K562 (cell line): ENCODE measurements at regions of chr1 and their contacts with region 1.

Region 1: GRCh38 chr1:207751790-207752455 is at the start of gene CD46:
- DNase-seq: peak; percentile 96 to 100 (median 96)
- ATAC-seq: peak; percentile 89
- H3K4me3 ChIP-seq: peak within 1 kb of the TSS; percentile 92
- H3K27ac ChIP-seq: peak within 1 kb of the TSS; percentile 80
- H3K4me1 ChIP-seq: peaks cover 33 to 59% of the 10 kb centered on the region in 2 experiments
- H3K27me3 ChIP-seq: no peaks in the 10 kb centered on the region
- CTCF ChIP-seq: peak in 2 of 3 experiments; percentile 2 to 4; a peak in 1 of 6 replicates
- EP300 ChIP-seq: peak; percentile 48
- POLR2A ChIP-seq: peak; percentile 96
- RAD21 ChIP-seq: no peak
- polyA plus RNA-seq, gene CD46: 143 to 220 TPM

Region 2: GRCh38 chr1:207025144-207025880 is 726.6 kb before region 1 on chr1:
- CTCF ChIA-PET with region 1: no interaction called
- POLR2A ChIA-PET with region 1: no interaction called
- in situ Hi-C with region 1: no loop called
- intact Hi-C with region 1: loop called (anchors 5 kb)
- DNase-seq: no peak
- ATAC-seq: peak; percentile 6
- H3K4me3 ChIP-seq: peak overlapping the region; percentile 15
- H3K27ac ChIP-seq: peak overlapping the region; percentile 100
- H3K4me1 ChIP-seq: peaks cover 49 to 85% of the 10 kb centered on the region in 2 experiments
- H3K27me3 ChIP-seq: no peaks in the 10 kb centered on the region
- CTCF ChIP-seq: 0 out of 6 replicates have a peak, but pooled peaks of 1 of the 3 experiments have one; percentile 4
- EP300 ChIP-seq: peak; percentile 2; the same call in 1 of the 2 replicates
- POLR2A ChIP-seq: no peak
- RAD21 ChIP-seq: no peak; a peak in 2 of 4 replicates

Region 3: GRCh38 chr1:207644852-207645634 is 106.9 kb before region 1 on chr1 and contains the start of gene CR1L:
- CTCF ChIA-PET with region 1: no interaction called
- POLR2A ChIA-PET with region 1: interaction called, 5 read pairs
- in situ Hi-C with region 1: no loop called
- intact Hi-C with region 1: loop called (anchors 5 kb)
- DNase-seq: peak; percentile 95 to 99 (median 96)
- ATAC-seq: peak; percentile 87
- H3K4me3 ChIP-seq: peak within 1 kb of the TSS; percentile 67
- H3K27ac ChIP-seq: peak within 1 kb of the TSS; percentile 80
- H3K4me1 ChIP-seq: peaks cover 23 to 25% of the 10 kb centered on the region in 2 experiments
- H3K27me3 ChIP-seq: no peaks in the 10 kb centered on the region
- CTCF ChIP-seq: no peak
- EP300 ChIP-seq: no peak
- POLR2A ChIP-seq: peak; percentile 86
- RAD21 ChIP-seq: no peak
- polyA plus RNA-seq, gene CR1L: 53.4 to 74.8 TPM

Region 4: DNA sequence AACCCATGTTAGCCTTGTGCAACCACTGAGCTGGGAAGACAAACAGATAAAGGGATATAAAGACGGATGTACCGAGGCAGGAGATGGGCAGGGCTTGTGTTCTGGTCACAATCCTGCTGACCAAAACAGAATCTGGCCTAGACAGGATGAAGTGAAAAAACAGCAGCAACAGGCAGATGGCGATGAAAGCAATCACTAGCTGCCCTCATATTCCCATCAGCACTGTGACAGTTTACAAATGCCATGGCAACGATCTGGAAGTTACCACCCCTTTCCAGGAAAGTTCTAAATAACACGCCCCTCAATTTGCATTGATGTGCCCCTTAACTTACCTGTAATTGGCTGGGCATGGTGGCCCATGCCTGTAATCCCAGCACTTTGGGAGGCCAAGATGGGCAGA is 40.6 kb before region 1 on chr1:
- CTCF ChIA-PET with region 1: interaction called, 3 read pairs
- POLR2A ChIA-PET with region 1: interaction called, 3 read pairs
- in situ Hi-C with region 1: no loop called
- intact Hi-C with region 1: loop called (anchors 2 kb)
- DNase-seq: peak in 2 of 4 experiments; percentile 63 to 69
- ATAC-seq: peak; percentile 91
- H3K4me3 ChIP-seq: no peak overlapping the region
- H3K27ac ChIP-seq: no peak overlapping the region
- H3K4me1 ChIP-seq: 0 out of 5 replicates have a peak, but pooled peaks cover 0 to 4% of the 10 kb centered on the region in 2 experiments
- H3K27me3 ChIP-seq: no peaks in the 10 kb centered on the region
- CTCF ChIP-seq: peak; percentile 35 to 62 (median 55); a peak in 4 of 6 replicates
- EP300 ChIP-seq: no peak
- POLR2A ChIP-seq: no peak
- RAD21 ChIP-seq: peak; percentile 63 to 83

Region 5: DNA sequence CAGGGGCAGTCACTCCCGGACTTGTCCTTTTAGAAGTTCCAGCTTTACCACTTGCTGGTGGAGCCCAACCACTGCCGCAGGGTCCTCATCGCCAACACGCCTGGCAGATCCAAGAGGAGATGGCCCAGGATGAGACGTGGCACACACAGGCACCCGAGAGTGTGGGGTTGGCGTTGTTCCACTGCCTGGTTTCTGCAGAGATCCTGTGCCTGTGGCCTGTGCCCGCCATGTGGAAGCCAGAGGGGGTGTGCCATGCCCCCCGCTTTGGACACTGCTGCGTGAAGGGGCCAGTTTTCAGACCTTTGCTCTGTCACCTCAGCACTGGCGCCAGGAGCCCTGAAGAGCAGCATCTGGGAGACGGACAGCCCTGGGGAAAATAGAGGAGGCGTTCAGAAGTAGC is 10.7 kb after region 1 on chr1:
- CTCF ChIA-PET with region 1: no interaction called
- POLR2A ChIA-PET with region 1: interaction called, 13 read pairs
- in situ Hi-C with region 1: no loop called
- intact Hi-C with region 1: no loop called
- DNase-seq: no peak
- ATAC-seq: no peak; the same call in 2 of the 3 replicates
- H3K4me3 ChIP-seq: no peak overlapping the region
- H3K27ac ChIP-seq: no peak overlapping the region
- H3K4me1 ChIP-seq: peaks cover 0 to 6% of the 10 kb centered on the region in 2 experiments; a peak in 1 of 5 replicates
- H3K27me3 ChIP-seq: no peaks in the 10 kb centered on the region
- CTCF ChIP-seq: no peak
- EP300 ChIP-seq: no peak
- POLR2A ChIP-seq: no peak; the same call in 1 of the 2 replicates
- RAD21 ChIP-seq: no peak

Region 6: GRCh38 chr1:207779008-207779407 is 27.1 kb after region 1 on chr1:
- CTCF ChIA-PET with region 1: no interaction called
- POLR2A ChIA-PET with region 1: no interaction called
- in situ Hi-C with region 1: no loop called
- intact Hi-C with region 1: loop called (anchors 2 kb)
- DNase-seq: peak in 1 of 4 experiments; percentile 40
- ATAC-seq: peak; percentile 63
- H3K4me3 ChIP-seq: no peak overlapping the region
- H3K27ac ChIP-seq: no peak overlapping the region
- H3K4me1 ChIP-seq: peaks cover 4 to 21% of the 10 kb centered on the region in 2 experiments; a peak in 4 of 5 replicates
- H3K27me3 ChIP-seq: no peaks in the 10 kb centered on the region
- CTCF ChIP-seq: no peak
- EP300 ChIP-seq: peak; percentile 77
- POLR2A ChIP-seq: no peak
- RAD21 ChIP-seq: no peak

Region 7: DNA sequence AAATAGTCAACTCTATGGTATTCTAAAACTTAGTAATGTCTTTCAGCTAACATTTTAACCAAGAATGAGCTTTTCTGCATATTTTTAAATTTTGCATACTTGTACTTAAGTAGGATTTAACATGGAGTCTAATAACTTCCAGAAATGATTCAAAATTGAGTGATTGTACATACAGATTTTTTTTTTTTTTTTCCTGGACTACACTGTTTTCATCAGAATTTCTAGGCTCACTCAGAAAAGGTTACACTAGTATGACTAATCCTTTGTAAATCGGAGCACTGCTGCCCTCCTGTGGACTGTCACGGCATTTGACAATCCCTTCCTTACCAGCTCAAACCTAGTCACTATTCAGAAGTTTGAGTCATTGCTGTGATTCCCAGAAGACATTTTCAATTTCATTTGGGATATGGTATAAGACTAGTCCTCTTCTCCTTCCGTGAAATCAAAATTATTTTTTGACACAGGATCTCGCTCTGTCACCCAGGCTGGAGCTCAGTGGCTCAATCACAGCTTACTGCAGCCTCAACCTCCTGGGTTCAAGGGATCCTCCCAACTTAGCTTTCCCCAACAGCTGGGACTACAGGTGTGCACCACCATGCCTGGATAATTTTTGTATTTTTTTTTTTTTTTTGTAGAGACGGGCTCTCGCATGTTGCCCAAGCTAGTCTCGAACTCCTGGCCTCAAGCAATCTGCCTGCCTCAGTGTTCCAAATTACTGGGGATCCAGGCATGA is 45.5 kb after region 1 on chr1:
- CTCF ChIA-PET with region 1: no interaction called
- POLR2A ChIA-PET with region 1: no interaction called
- in situ Hi-C with region 1: no loop called
- intact Hi-C with region 1: loop called (anchors 2 kb)
- DNase-seq: peak; percentile 74 to 88 (median 79)
- ATAC-seq: peak; percentile 96
- H3K4me3 ChIP-seq: no peak overlapping the region
- H3K27ac ChIP-seq: no peak overlapping the region
- H3K4me1 ChIP-seq: no peaks in the 10 kb centered on the region
- H3K27me3 ChIP-seq: no peaks in the 10 kb centered on the region
- CTCF ChIP-seq: peak; percentile 77 to 91 (median 87)
- EP300 ChIP-seq: no peak
- POLR2A ChIP-seq: no peak; the same call in none of the 2 replicates
- RAD21 ChIP-seq: peak; percentile 85 to 87

Region 8: GRCh38 chr1:207885129-207886032 is 133.5 kb after region 1 on chr1:
- CTCF ChIA-PET with region 1: no interaction called
- POLR2A ChIA-PET with region 1: no interaction called
- in situ Hi-C with region 1: no loop called
- intact Hi-C with region 1: no loop called
- DNase-seq: peak; percentile 88 to 92 (median 90)
- ATAC-seq: peak; percentile 96
- H3K4me3 ChIP-seq: no peak overlapping the region
- H3K27ac ChIP-seq: no peak overlapping the region
- H3K4me1 ChIP-seq: peaks cover 21 to 35% of the 10 kb centered on the region in 2 experiments; a peak in 4 of 5 replicates
- H3K27me3 ChIP-seq: no peaks in the 10 kb centered on the region
- CTCF ChIP-seq: peak; percentile 94 to 99 (median 97)
- EP300 ChIP-seq: peak; percentile 35; the same call in 1 of the 2 replicates
- POLR2A ChIP-seq: no peak
- RAD21 ChIP-seq: peak; percentile 97 to 98

Region 9: DNA sequence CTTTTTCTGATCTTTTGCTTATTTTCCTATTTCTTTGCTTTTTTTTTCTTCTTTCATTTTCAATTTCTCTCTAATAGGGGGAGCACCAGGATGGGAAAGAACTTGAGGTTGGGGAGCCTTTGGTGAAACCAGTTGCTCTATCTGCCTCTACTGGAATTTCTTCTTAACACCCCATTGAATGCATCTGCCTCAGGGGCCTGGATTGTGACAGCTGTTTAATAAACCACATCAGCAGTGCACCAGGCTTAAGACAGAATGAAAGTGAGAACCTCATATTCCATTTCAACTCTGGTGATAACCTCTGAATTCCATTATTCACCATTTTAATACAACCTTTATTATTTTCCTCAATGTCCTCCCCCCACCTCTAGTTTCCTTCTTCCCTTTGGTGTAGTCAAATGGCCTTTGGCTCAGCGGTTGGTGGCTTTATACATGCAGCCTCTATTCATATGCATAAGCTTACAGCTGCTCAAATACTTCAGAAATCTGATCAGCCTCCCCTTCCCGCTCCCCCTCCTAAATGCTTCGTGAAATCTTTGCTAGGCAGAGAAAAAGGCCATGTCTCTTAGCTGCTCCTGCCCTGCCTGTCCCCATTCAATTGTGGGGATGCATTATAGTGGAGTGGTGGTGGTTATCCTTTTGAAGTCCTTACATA is 1029.6 kb after region 1 on chr1:
- CTCF ChIA-PET with region 1: no interaction called
- POLR2A ChIA-PET with region 1: no interaction called
- in situ Hi-C with region 1: no loop called
- intact Hi-C with region 1: no loop called
- DNase-seq: no peak
- ATAC-seq: no peak
- H3K4me3 ChIP-seq: no peak overlapping the region
- H3K27ac ChIP-seq: no peak overlapping the region
- H3K4me1 ChIP-seq: no peaks in the 10 kb centered on the region
- H3K27me3 ChIP-seq: no peaks in the 10 kb centered on the region
- CTCF ChIP-seq: no peak
- EP300 ChIP-seq: no peak
- POLR2A ChIP-seq: no peak
- RAD21 ChIP-seq: no peak